Right cardiac atrium (tissue), 5 donors: ENCODE measurements at regions of chr7 and their contacts with region 1.

Region 1: DNA sequence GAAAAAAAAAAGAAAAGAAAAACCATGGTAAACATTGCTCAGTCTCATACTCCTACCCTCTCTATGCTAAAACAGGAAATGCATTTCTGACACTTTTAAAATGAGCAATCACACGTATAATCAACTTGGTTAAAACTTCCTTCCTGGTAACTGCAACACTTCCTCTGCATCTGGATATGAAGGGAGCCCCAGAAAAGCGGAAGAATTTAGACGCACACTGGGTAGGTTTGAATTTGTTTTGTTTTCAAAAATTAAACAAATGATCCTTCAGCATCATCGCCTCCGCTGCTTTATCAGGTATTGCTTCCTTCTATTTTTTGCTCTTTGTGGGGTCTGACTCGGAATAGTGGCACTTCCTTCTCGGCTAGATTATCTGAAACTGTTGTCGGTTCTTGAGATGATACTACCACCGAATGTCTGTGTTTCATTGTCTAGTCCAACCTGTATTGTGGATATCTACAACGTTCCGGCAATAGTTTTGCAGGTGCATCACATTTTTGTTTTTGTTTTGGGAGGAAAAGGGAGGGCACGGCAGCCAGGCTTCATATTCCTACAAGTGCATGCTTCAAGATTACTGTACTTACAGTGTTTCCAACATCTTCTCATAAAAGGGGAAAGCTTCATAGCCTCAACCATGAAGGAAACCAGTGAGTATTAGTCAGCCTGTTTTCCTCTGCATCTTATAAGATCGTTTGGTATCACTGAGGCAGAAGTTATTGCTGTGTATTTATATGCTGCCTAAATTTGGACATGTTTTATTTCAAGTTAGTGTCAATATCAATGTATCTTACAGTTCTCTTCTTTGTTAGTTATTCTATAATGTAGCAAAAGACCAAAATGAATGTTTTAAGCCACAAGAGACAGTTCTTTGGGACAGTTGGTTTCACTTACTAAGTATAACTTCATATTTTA is at the start of gene PIK3CG:
- DNase-seq: no peak
- ATAC-seq: peak; percentile 51 to 58
- H3K4me3 ChIP-seq: peak within 1 kb of the TSS; percentile 61
- H3K27ac ChIP-seq: peak within 1 kb of the TSS; percentile 28
- H3K4me1 ChIP-seq: no peaks in the 10 kb centered on the region
- H3K27me3 ChIP-seq: no peaks in the 10 kb centered on the region
- total RNA-seq, gene PIK3CG: 1.8 to 3.3 (median 2.4) TPM

Region 2: GRCh38 chr7:105003275-105003674 is 1862.1 kb before region 1 on chr7:
- intact Hi-C with region 1: loop called in 1 of 4 experiments (anchors 10 kb)
- DNase-seq: peak in 1 of 3 donors; percentile 55
- ATAC-seq: peak; percentile 67 to 85
- H3K4me3 ChIP-seq: no peak overlapping the region
- H3K27ac ChIP-seq: peak overlapping the region; percentile 77
- H3K4me1 ChIP-seq: peaks cover 10% of the 10 kb centered on the region
- H3K27me3 ChIP-seq: no peaks in the 10 kb centered on the region